ENCODE measurements at regions of chr1 and their contacts with region 1.

Region 1: DNA sequence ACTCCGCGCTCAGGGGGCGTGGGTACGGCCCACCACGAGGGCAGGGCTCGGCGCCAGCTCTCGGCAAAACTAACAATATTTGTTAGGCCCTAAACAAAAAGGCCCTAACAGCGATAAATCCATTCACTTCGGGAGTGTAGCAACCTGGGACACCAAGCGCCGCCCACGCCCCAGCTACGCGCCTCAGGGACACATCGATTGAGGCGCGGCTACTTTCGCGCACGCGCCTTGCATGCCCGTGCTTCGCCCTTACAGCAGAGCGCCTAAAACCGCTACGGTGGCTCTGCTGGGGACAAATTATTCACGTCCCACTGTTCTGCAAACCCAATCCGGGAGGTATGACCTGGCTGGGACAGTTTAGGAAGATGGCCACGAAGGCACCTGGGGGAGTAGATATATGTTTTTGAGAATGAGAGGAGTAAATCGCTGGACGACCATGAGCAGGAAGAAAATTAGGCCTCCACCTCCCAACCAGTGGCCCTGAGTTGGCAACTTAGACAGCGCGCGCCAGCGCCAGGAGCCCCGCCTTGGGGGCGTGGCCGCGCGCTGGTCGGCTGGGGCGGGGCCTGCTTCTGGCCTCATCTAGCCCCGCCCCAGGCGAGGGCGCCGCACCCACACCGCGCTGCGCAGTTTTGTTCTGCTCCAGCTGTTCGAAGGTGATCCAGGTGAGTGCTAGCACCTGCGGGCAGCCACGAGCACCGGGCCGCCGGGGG is at the start of gene MGST3:
- DNase-seq: peak; percentile 99
- ATAC-seq: peak; percentile 91
- H3K4me3 Mint-ChIP-seq: no peak within 1 kb of the TSS
- H3K27ac Mint-ChIP-seq: no peak within 1 kb of the TSS
- H3K4me1 Mint-ChIP-seq: peaks cover 17% of the 10 kb centered on the region
- H3K27me3 Mint-ChIP-seq: no peaks in the 10 kb centered on the region
- total RNA-seq, gene MGST3: 49.1 to 52.1 TPM

Region 2: GRCh38 chr1:165616987-165617546 is 13.7 kb before region 1 on chr1:
- CTCF ChIA-PET with region 1: no interaction called
- POLR2A ChIA-PET with region 1: interaction called, 10 read pairs
- intact Hi-C with region 1: no loop called
- DNase-seq: no peak
- ATAC-seq: no peak
- H3K4me3 Mint-ChIP-seq: no peak overlapping the region
- H3K27ac Mint-ChIP-seq: no peak overlapping the region
- H3K4me1 Mint-ChIP-seq: no peaks in the 10 kb centered on the region
- H3K27me3 Mint-ChIP-seq: peaks cover 18% of the 10 kb centered on the region

Region 3: DNA sequence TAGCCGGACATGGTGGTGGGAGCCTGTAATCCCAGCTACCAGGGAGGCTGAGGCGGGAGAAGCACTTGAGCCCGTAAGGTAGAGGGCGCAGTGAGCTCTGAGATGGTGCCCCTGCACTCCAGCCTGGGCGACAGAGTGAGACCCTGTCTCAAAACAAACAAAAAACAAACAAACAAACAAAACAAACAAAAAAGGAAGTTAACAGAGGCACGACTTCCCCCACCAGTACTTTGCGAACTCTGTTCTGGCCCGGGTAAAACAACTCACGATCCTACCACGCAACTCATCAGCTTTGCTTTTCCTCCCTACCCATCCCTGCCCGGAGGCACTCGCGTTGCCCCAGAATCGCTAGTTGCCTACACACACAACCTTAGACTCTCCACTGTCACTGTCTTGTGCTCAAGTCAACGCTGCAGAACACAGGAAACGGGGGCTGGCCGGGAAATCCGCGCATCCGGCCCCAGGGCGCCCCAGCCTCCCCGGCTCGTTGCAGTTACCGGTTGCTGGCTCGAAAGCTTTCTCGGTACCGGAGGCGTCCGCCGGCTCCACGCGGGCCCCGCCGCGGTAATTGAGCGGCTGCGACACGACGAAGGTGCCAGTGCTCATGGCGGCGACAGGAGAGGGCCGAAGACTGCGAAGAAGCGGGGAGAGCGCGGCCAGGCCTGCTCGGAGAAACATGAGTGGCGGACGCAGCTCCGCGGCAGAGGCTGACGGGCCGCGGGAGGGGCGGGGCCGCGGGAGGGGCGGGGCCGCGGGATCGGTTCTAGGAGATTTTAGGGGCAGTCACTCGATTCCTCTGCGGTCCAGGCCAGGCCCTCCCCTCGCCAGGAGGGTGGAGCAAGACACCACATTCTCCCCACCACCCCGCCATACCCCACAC is 67.3 kb after region 1 on chr1 and contains the start of gene ALDH9A1:
- CTCF ChIA-PET with region 1: no interaction called
- POLR2A ChIA-PET with region 1: interaction called, 3 read pairs
- intact Hi-C with region 1: loop called (anchors 1 kb)
- DNase-seq: peak; percentile 90
- ATAC-seq: peak; percentile 91
- H3K4me3 Mint-ChIP-seq: peak within 1 kb of the TSS; percentile 99
- H3K27ac Mint-ChIP-seq: peak within 1 kb of the TSS; percentile 99
- H3K4me1 Mint-ChIP-seq: peaks cover 33% of the 10 kb centered on the region
- H3K27me3 Mint-ChIP-seq: no peaks in the 10 kb centered on the region
- total RNA-seq, gene ALDH9A1: 29.0 to 37.6 TPM

Region 4: GRCh38 chr1:165827268-165828102 is 196.7 kb after region 1 on chr1 and contains the start of gene UCK2:
- CTCF ChIA-PET with region 1: interaction called, 3 read pairs
- POLR2A ChIA-PET with region 1: interaction called, 4 read pairs
- intact Hi-C with region 1: loop called (anchors 1 kb)
- DNase-seq: peak; percentile 83
- ATAC-seq: peak; percentile 76
- H3K4me3 Mint-ChIP-seq: peak within 1 kb of the TSS; percentile 96
- H3K27ac Mint-ChIP-seq: peak within 1 kb of the TSS; percentile 92
- H3K4me1 Mint-ChIP-seq: peaks cover 13% of the 10 kb centered on the region
- H3K27me3 Mint-ChIP-seq: no peaks in the 10 kb centered on the region
- total RNA-seq, gene UCK2: 69.4 to 81.5 TPM

Region 5: GRCh38 chr1:166838766-166839599 is 1208.2 kb after region 1 on chr1 and contains the start of gene POGK:
- CTCF ChIA-PET with region 1: no interaction called
- POLR2A ChIA-PET with region 1: no interaction called
- intact Hi-C with region 1: loop called in 1 of 2 experiments (anchors 5 kb)
- DNase-seq: peak; percentile 93
- ATAC-seq: peak; percentile 97
- H3K4me3 Mint-ChIP-seq: peak within 1 kb of the TSS; percentile 90
- H3K27ac Mint-ChIP-seq: peak within 1 kb of the TSS; percentile 98
- H3K4me1 Mint-ChIP-seq: peaks cover 56% of the 10 kb centered on the region
- H3K27me3 Mint-ChIP-seq: no peaks in the 10 kb centered on the region
- total RNA-seq, gene POGK: 36.2 to 40.6 TPM

Region 6: GRCh38 chr1:167447521-167448136 is 1816.8 kb after region 1 on chr1:
- CTCF ChIA-PET with region 1: no interaction called
- POLR2A ChIA-PET with region 1: no interaction called
- intact Hi-C with region 1: loop called in 1 of 2 experiments (anchors 5 kb)
- DNase-seq: peak; percentile 87
- ATAC-seq: peak; percentile 86
- H3K4me3 Mint-ChIP-seq: peak overlapping the region; percentile 56
- H3K27ac Mint-ChIP-seq: peak overlapping the region; percentile 94
- H3K4me1 Mint-ChIP-seq: peaks cover 86% of the 10 kb centered on the region
- H3K27me3 Mint-ChIP-seq: no peaks in the 10 kb centered on the region